Breast epithelium (tissue), 4 donors: ENCODE measurements at regions of chr1 and their contacts with region 1.

Region 1: GRCh38 chr1:113850080-113850803 is 21.3 kb downstream of the PTPN22 start:
- DNase-seq: no peak
- H3K4me3 ChIP-seq: no peak overlapping the region
- H3K27ac ChIP-seq: no peak overlapping the region
- H3K4me1 ChIP-seq: no peaks in the 10 kb centered on the region
- H3K27me3 ChIP-seq: no peaks in the 10 kb centered on the region
- CTCF ChIP-seq: no peak
- POLR2A ChIP-seq: no peak

Region 2: DNA sequence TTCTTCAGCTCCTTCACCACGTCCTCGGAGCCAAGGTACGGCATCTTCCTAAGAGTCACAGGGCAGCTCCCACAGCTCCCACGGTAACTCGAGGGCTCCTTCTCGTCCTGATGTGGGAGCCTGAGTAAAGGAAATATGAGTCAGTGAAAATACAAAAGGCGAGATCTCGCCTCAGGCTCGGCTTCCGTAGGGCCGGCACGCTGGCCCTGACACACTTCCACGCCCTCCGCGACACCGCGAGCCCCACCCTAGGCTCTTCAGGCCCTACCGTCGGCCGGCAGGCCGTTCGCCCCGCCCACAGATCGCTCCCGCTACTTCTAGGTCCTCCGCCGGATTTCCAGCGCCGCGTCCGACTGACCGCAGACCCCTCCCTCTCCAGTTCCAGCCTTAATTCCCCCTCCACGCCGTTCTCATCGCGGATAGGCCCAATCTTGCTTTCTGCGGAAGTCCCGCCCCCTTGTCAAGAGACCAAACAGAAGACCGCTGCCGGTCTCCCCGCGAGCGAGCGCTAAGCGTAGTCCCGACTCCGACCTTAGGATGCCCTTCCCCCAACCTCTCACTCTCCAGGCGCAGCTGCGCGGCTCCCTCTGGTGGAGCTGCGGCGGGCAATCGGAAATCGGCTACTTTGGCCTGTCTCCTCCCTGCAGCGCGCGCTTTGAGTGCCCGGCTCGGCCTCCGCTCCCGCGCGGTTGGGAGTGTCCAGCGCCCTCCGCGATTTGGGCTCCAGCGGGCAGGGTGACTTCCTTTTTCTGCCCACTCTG is 54.6 kb after region 1 on chr1 and contains the starts of genes AP4B1 and DCLRE1B:
- intact Hi-C with region 1: no loop called
- DNase-seq: peak; percentile 96 to 97
- H3K4me3 ChIP-seq: peak within 1 kb of the TSS; percentile 66 to 91 (median 67)
- H3K27ac ChIP-seq: peak within 1 kb of the TSS; percentile 89 to 92
- H3K4me1 ChIP-seq: peaks cover 0 to 4% of the 10 kb centered on the region in 2 donors
- H3K27me3 ChIP-seq: no peaks in the 10 kb centered on the region
- CTCF ChIP-seq: peak; percentile 60 to 86 (median 78)
- POLR2A ChIP-seq: no peak
- total RNA-seq, gene AP4B1: 10.8 to 18.1 (median 14.9) TPM
- total RNA-seq, gene DCLRE1B: 3.3 to 6.2 (median 3.5) TPM

Region 3: DNA sequence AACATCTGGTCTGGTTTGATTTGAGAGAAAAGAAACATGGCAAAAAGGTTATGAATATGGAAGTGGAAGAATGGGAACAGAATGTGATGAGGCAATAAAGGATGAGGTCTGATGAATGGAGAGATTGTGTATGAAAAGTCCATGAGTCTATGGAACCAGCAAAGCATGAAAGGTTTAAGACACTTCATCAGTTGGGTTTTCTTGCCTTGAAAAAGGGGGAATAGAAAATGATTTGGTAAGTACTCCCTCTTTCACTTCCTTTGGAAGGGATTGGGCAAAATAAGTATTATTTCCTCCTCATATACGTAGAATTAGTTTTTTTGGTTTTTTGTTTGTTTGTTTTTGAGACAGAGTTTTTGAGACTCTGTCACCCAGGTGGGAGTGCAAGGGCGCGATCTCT is 505.0 kb after region 1 on chr1:
- intact Hi-C with region 1: loop called (anchors 5 kb)
- DNase-seq: no peak
- H3K4me3 ChIP-seq: no peak overlapping the region
- H3K27ac ChIP-seq: no peak overlapping the region
- H3K4me1 ChIP-seq: no peaks in the 10 kb centered on the region
- H3K27me3 ChIP-seq: no peaks in the 10 kb centered on the region
- CTCF ChIP-seq: no peak
- POLR2A ChIP-seq: no peak